Left cardiac atrium (tissue), 4 donors: ENCODE measurements at regions of chr12 and their contacts with region 1.

Region 1: GRCh38 chr12:27024291-27024690 is 1.9 kb downstream of the MED21 start:
- DNase-seq: no peak
- ATAC-seq: no peak

Region 2: GRCh38 chr12:27319409-27319808 is 295.1 kb after region 1 on chr12:
- intact Hi-C with region 1: loop called in 1 of 2 experiments (anchors 10 kb)
- DNase-seq: no peak
- ATAC-seq: peak in 1 of 2 donors; percentile 36

Region 3: DNA sequence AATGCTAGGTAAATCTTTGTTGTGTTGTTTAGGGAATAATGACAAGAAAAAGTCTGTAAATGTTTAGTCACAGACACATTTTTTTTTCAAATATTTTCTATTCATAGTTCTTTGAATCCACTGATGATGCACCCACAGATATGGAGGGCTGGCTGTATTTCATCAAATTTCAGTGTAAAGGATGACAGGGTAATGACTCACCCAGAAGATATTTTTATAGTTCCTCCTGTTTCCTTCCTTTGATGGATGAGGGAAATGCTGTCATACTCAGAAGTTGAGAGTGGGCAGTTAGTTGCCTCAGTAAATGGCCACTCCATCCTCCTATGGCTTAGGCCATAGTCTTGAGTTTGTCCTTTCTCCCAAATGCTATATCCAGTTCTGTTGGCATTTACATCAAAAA is 595.0 kb after region 1 on chr12:
- intact Hi-C with region 1: no loop called
- DNase-seq: no peak
- ATAC-seq: peak in 1 of 2 donors; percentile 86